ENCODE measurements at regions of chr6 and their contacts with region 1.

Region 1: DNA sequence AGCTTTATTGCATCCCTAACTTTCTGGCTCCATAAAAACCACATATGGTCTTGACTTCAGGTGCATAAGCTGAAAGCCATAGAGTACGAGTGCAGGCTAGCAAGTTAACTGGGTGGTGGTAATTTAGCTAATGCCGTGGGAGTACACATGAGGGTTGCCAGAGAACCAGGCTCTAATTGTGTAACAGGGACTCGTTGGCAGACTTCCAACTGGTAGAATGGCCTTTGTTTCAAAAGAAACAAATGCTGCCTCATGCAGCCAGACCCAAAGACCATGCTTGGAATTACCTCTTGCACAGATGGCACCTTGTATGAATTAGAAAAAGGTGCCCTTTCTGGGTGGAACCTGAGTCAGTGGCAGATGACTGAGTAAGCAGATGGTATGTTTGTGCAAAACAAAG is 73.2 kb downstream of the LY86 start:
- DNase-seq: no peak
- H3K4me3 ChIP-seq: no peak overlapping the region
- H3K27ac ChIP-seq: no peak overlapping the region
- H3K4me1 ChIP-seq: no peaks in the 10 kb centered on the region
- H3K27me3 ChIP-seq: no peaks in the 10 kb centered on the region; a peak in 1 of 7 replicates
- CTCF ChIP-seq: no peak
- EP300 ChIP-seq: no peak
- POLR2A ChIP-seq: no peak
- RAD21 ChIP-seq: no peak

Region 2: GRCh38 chr6:6646859-6647258 is 14.8 kb before region 1 on chr6:
- CTCF ChIA-PET with region 1: interaction called, 13 read pairs
- POLR2A ChIA-PET with region 1: interaction called, 3 read pairs
- DNase-seq: no peak
- H3K4me3 ChIP-seq: no peak overlapping the region
- H3K27ac ChIP-seq: no peak overlapping the region
- H3K4me1 ChIP-seq: no peaks in the 10 kb centered on the region
- H3K27me3 ChIP-seq: no peaks in the 10 kb centered on the region; a peak in 2 of 7 replicates
- CTCF ChIP-seq: peak in 2 of 3 experiments; percentile 32 to 50; a peak in 3 of 4 replicates
- EP300 ChIP-seq: no peak
- POLR2A ChIP-seq: no peak
- RAD21 ChIP-seq: peak in 1 of 2 experiments; percentile 35; a peak in 3 of 4 replicates

Region 3: DNA sequence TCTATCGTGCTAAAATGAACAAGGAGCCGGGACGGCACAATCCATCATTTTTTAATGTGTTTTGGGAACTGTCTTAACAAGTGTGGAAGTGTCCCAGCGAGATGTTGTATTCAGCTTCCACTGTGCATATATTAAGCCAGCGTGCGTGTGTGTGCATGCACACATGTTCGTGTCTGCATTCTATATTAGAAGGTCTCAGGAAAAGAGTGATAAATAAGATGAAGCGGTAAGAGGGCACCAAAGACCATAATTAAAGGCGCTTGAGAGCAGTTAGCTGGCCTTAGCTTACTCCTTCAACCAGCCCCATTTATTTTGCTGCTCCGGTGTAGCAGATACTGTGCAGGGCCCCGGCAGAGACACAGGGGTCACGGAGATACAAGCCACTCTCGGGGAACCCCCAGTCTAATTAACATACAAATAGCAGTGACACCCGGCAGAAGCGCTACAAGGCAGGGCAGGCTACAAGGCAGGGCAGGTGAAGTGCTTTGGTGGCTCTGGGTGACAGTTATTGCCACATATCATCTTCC is 239.6 kb after region 1 on chr6:
- CTCF ChIA-PET with region 1: no interaction called
- POLR2A ChIA-PET with region 1: no interaction called
- DNase-seq: no peak
- H3K4me3 ChIP-seq: no peak overlapping the region
- H3K27ac ChIP-seq: no peak overlapping the region
- H3K4me1 ChIP-seq: peaks cover 0 to 5% (median 0%) of the 10 kb centered on the region in 4 experiments; a peak in 2 of 7 replicates
- H3K27me3 ChIP-seq: no peaks in the 10 kb centered on the region
- CTCF ChIP-seq: no peak
- EP300 ChIP-seq: no peak
- POLR2A ChIP-seq: no peak
- RAD21 ChIP-seq: no peak

Measured in H1 (cell line).